ENCODE measurements at regions of chr10 and their contacts with region 1.

Region 1: DNA sequence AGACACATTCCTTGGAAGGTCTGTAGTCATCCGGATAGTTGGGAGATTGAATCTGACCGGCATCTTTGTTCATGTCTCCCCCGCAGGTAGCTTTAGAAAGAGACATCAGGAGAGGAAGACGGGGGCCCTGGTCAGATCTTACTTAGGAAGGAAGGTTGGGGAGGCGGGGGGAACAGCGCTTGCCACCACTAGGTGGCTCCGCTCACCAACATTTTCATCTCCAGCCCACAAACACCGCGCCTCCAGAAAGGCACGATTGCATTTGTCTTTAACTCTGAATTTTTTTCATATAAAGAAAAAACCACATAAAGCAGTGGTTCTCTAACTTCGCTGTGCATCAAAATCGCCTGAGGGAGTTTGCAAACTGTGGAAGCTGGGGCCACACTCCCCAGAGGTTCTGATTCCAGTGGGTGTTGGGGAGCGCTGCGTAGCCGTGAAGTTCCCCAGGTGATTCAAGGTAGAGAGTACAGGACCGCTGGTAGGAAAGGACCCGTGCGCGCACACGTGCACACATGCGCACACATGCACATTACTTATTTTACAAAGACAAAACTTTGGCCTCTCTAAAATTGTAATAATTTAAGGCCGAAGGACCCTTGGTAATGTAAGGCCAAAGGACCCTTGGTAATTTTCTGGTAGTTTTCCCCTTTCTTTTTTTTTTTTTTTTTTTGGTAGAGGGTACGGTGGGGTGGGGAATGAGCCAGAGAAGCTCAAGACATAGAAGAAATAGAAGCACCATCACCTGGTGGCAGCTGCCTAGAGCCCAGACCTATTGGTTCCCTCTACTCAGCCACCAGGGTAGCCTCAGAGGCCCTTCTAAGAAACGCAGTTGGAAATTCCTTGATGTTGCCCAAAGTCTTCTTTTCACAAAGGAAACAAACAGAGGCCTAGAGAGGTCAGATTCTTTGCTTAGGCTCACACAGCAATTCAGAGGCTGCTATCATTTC is 37.4 kb upstream of the OPALIN start:
- DNase-seq: no peak
- ATAC-seq: peak; percentile 97
- H3K4me3 ChIP-seq: no peak overlapping the region
- H3K27ac ChIP-seq: no peak overlapping the region
- H3K4me1 ChIP-seq: no peaks in the 10 kb centered on the region
- H3K27me3 ChIP-seq: peaks cover 3 to 4% of the 10 kb centered on the region in 2 experiments; a peak in 3 of 4 replicates
- CTCF ChIP-seq: peak; percentile 86 to 91 (median 87)
- EP300 ChIP-seq: no peak
- POLR2A ChIP-seq: no peak
- RAD21 ChIP-seq: peak; percentile 84

Region 2: GRCh38 chr10:96608805-96609204 is 212.6 kb after region 1 on chr10:
- CTCF ChIA-PET with region 1: interaction called, 3 read pairs
- POLR2A ChIA-PET with region 1: no interaction called
- RAD21 ChIA-PET with region 1: no interaction called
- SMC1A ChIA-PET with region 1: no interaction called
- in situ Hi-C with region 1: no loop called
- intact Hi-C with region 1: loop called (anchors 10 kb)
- DNase-seq: no peak
- ATAC-seq: no peak
- H3K4me3 ChIP-seq: no peak overlapping the region
- H3K27ac ChIP-seq: no peak overlapping the region
- H3K4me1 ChIP-seq: no peaks in the 10 kb centered on the region
- H3K27me3 ChIP-seq: no peaks in the 10 kb centered on the region
- CTCF ChIP-seq: no peak
- EP300 ChIP-seq: no peak
- POLR2A ChIP-seq: no peak
- RAD21 ChIP-seq: no peak

Region 3: GRCh38 chr10:96626795-96627194 is 230.6 kb after region 1 on chr10:
- CTCF ChIA-PET with region 1: no interaction called
- POLR2A ChIA-PET with region 1: no interaction called
- RAD21 ChIA-PET with region 1: no interaction called
- SMC1A ChIA-PET with region 1: no interaction called
- in situ Hi-C with region 1: no loop called
- intact Hi-C with region 1: no loop called
- DNase-seq: no peak
- ATAC-seq: peak; percentile 63
- H3K4me3 ChIP-seq: no peak overlapping the region
- H3K27ac ChIP-seq: no peak overlapping the region
- H3K4me1 ChIP-seq: no peaks in the 10 kb centered on the region
- H3K27me3 ChIP-seq: no peaks in the 10 kb centered on the region
- CTCF ChIP-seq: peak in 2 of 3 experiments; percentile 9 to 27; a peak in 1 of 6 replicates
- EP300 ChIP-seq: no peak
- POLR2A ChIP-seq: no peak
- RAD21 ChIP-seq: no peak

Region 4: GRCh38 chr10:96651998-96652431 is 255.8 kb after region 1 on chr10:
- CTCF ChIA-PET with region 1: no interaction called
- POLR2A ChIA-PET with region 1: no interaction called
- RAD21 ChIA-PET with region 1: no interaction called
- SMC1A ChIA-PET with region 1: no interaction called
- in situ Hi-C with region 1: no loop called
- intact Hi-C with region 1: no loop called
- DNase-seq: peak; percentile 79
- ATAC-seq: peak; percentile 89
- H3K4me3 ChIP-seq: no peak overlapping the region
- H3K27ac ChIP-seq: peak overlapping the region; percentile 79
- H3K4me1 ChIP-seq: peaks cover 50% of the 10 kb centered on the region
- H3K27me3 ChIP-seq: no peaks in the 10 kb centered on the region
- CTCF ChIP-seq: no peak
- EP300 ChIP-seq: peak; percentile 85 to 95
- POLR2A ChIP-seq: no peak
- RAD21 ChIP-seq: 0 out of 2 replicates have a peak, but pooled peaks have one; percentile 2

Region 5: DNA sequence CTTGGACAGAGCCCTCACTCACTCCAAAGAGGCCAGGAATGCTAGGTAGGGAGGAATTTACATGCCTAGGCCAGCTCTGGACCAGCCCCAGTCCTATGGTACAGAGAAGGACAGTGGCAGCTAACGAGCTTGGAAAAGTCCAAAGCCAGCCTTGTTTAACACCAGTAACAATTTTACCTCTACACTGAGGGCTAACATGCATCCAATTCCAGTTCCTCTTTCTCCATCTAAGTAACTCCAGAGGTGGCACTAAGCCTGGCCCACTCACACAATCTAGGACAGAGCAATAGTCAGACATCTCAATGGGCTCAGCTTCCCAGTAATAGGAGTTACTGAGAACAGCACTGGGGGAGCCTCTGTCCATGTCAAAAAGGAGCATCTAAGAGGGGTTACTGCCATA is 430.2 kb after region 1 on chr10:
- CTCF ChIA-PET with region 1: interaction called, 3 read pairs
- POLR2A ChIA-PET with region 1: no interaction called
- RAD21 ChIA-PET with region 1: no interaction called
- SMC1A ChIA-PET with region 1: no interaction called
- in situ Hi-C with region 1: loop called (anchors 10 kb)
- intact Hi-C with region 1: loop called (anchors 10 kb)
- DNase-seq: no peak
- ATAC-seq: no peak
- H3K4me3 ChIP-seq: no peak overlapping the region
- H3K27ac ChIP-seq: no peak overlapping the region
- H3K4me1 ChIP-seq: peaks cover 5% of the 10 kb centered on the region
- H3K27me3 ChIP-seq: no peaks in the 10 kb centered on the region; a peak in 1 of 4 replicates
- CTCF ChIP-seq: no peak
- EP300 ChIP-seq: no peak
- POLR2A ChIP-seq: no peak
- RAD21 ChIP-seq: no peak